ENCODE measurements at regions of chr9 and their contacts with region 1.

Region 1: GRCh38 chr9:93095205-93096130 is 549 bp upstream of the CARD19 start:
- DNase-seq: peak; percentile 100
- H3K4me3 Mint-ChIP-seq: peak overlapping the region; percentile 89
- H3K27ac Mint-ChIP-seq: peak overlapping the region; percentile 99
- H3K4me1 Mint-ChIP-seq: peaks cover 73% of the 10 kb centered on the region
- H3K27me3 Mint-ChIP-seq: no peaks in the 10 kb centered on the region

Region 2: DNA sequence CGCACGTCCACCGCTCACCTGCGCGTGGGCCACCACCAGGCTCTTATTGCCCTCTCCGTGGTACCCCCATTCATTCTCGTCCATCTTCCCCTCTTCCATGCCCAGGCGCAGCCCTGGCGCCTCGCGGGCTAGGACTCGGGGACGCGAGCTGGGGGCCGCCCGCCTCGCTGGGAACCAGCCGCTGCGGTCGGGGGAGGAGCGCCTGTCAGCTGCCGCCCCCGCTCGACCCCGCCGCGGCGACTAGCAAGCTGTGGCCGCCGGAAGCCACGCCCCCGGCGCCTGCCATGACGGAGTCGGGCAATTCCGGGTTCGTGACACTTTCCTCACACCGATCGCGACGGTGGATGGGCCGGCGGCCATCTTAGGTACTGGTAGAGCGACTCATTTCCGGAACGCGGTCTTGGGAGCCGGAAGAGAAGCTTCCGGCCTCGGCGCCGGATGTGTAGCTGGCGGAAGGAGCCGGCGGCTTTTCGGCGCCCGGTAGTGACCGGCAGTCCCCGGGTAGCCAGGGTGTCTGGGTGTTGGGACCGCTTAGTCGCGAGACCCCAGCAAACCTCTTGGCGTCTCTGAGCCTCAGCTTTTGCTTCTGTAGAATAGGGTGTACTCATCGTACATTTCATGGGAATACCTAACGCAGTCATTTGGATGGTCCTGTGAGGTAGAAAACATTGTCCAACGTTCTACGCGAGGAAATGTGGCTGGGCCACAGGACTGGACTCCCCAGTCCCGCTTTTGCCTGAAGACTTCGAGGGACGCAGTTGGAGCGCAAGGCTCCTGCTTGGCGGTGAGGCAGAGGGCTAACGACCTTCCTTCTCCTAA is 425.4 kb before region 1 on chr9 and contains the start of gene IPPK:
- intact Hi-C with region 1: loop called (anchors 10 kb)
- DNase-seq: peak; percentile 98
- H3K4me3 Mint-ChIP-seq: peak within 1 kb of the TSS; percentile 88
- H3K27ac Mint-ChIP-seq: peak within 1 kb of the TSS; percentile 88
- H3K4me1 Mint-ChIP-seq: peaks cover 38% of the 10 kb centered on the region
- H3K27me3 Mint-ChIP-seq: no peaks in the 10 kb centered on the region
- total RNA-seq, gene IPPK: 14.8 and 14.9 TPM in 2 replicates

Region 3: DNA sequence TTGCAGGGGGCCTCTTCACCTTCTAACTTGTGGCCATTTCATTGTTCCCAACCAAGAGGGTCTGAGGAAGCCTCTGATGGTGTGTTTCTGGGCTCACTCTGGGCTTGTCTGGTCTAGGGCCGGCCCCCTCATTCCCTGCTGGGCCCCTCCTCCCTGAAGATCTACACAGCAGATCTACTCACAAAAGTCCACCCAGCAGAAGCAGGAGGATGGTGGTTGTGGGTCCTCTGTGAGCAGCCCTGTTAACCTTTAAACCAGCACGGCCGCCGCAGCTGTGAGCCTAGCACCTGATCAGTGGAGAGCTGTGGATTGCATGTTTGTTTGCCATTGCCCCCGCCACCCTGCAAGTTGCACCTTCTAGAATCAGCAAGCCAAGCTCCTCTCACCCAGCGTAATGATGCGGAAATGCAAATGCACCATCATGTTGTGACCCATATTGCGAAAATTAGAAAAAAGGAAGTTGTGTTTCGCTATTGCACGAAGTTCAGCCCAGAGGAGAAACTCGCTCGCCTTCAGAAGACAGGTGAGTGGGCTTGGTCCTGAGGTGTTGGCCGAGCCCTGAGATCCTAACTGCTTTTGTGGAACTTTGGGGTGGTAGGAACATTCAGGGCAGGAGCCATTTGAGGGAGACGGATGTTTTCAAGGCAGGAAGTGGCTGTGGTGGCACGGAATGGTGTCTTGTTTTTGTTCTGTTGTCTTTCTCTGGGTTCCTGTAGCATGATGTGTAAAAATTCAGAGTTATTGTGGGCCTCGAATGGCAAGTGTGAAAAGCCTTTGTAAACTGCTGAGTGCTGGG is 131.4 kb before region 1 on chr9:
- intact Hi-C with region 1: loop called (anchors 1 kb)
- DNase-seq: peak; percentile 77
- H3K4me3 Mint-ChIP-seq: peak overlapping the region; percentile 98
- H3K27ac Mint-ChIP-seq: peak overlapping the region; percentile 97
- H3K4me1 Mint-ChIP-seq: peaks cover 69% of the 10 kb centered on the region
- H3K27me3 Mint-ChIP-seq: no peaks in the 10 kb centered on the region

Region 4: GRCh38 chr9:93058355-93059096 is 36.9 kb before region 1 on chr9 and contains the start of gene SUSD3:
- intact Hi-C with region 1: loop called (anchors 1 kb)
- DNase-seq: peak; percentile 70
- H3K4me3 Mint-ChIP-seq: peak within 1 kb of the TSS; percentile 91
- H3K27ac Mint-ChIP-seq: peak within 1 kb of the TSS; percentile 94
- H3K4me1 Mint-ChIP-seq: peaks cover 51% of the 10 kb centered on the region
- H3K27me3 Mint-ChIP-seq: no peaks in the 10 kb centered on the region
- total RNA-seq, gene SUSD3: 31.7 and 33.2 TPM in 2 replicates

Region 5: DNA sequence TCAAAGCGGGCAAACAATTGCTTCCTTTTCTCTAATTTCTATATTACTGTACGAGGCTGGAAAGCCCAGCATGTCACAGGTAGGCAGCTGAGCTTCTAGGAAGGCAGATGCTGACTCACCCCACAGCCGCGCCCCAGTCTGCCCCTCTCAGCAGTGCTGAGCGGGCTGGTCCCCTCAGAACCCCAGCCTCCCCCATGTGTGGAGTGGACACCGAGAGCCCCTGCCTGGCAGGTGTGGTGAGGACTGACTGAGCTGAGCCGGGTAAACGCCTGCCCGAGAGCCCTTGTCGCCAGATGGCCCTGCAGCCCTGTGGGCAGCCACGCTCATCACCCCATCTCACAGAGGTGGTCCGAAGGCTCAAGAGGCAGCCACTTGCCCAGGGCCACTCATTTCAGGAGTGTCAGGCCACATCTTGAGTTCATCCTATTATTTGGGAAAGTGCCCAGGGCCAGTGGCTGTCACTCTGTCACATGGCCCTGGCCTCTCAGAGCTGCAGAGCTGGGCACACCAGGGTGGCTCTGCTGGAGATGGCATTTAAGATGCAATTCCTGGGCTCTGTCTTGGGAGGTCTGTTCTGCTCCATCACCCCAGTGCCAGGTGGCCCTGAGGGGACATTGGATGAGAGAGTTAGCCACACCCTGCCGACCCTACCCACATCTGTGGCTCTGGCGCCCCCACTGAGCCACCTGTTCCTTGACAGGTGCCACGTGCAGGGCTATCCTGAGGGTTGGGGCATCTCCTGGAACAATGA is 13.0 kb after region 1 on chr9:
- intact Hi-C with region 1: loop called (anchors 1 kb)
- DNase-seq: peak; percentile 52
- H3K4me3 Mint-ChIP-seq: peak overlapping the region; percentile 58
- H3K27ac Mint-ChIP-seq: peak overlapping the region; percentile 75
- H3K4me1 Mint-ChIP-seq: peaks cover 53% of the 10 kb centered on the region
- H3K27me3 Mint-ChIP-seq: no peaks in the 10 kb centered on the region

Region 6: DNA sequence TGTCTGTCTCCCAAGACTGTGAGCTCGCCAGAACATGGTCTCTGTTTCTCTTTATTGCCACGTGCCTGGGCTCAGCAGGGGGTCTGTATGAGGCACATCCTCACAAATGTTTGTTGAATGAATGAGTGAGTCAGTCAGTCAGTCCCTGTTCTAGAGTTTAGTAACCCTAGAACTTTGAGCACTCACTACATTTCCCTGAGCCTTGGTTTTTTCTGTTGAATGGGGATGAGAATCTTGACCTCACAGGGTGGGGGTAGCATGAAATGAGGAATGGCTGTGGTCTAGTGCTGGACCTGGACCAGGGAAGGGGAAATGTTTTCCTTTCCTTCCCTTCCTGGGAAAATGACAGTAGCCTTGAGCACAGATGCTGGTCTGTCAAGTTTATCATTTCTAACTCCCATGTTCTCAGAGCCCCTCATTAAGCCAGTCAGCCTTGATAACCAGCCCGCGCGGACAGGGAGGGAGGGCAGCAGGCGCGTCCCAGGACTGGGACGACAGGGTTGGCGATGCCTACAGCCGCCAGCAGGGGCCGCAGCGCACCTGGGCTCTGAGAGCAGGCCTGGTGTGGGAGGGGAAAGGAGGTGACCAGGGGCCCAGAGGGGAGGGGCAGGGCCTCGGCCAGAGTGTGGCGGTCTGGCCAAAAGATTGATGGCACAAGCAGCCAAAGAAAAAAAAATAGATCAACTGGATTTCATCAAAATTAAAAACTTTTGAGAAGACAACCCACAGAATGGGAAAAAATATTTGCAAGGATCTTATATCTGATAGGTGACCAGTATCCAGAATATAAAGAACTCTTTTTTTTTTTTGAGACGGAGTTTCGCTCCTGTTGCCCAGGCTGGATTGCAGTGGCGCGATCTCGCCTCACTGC is 64.4 kb after region 1 on chr9:
- intact Hi-C with region 1: loop called (anchors 1 kb)
- DNase-seq: peak; percentile 67
- H3K4me3 Mint-ChIP-seq: no peak overlapping the region
- H3K27ac Mint-ChIP-seq: no peak overlapping the region
- H3K4me1 Mint-ChIP-seq: peaks cover 25% of the 10 kb centered on the region
- H3K27me3 Mint-ChIP-seq: no peaks in the 10 kb centered on the region

Region 7: DNA sequence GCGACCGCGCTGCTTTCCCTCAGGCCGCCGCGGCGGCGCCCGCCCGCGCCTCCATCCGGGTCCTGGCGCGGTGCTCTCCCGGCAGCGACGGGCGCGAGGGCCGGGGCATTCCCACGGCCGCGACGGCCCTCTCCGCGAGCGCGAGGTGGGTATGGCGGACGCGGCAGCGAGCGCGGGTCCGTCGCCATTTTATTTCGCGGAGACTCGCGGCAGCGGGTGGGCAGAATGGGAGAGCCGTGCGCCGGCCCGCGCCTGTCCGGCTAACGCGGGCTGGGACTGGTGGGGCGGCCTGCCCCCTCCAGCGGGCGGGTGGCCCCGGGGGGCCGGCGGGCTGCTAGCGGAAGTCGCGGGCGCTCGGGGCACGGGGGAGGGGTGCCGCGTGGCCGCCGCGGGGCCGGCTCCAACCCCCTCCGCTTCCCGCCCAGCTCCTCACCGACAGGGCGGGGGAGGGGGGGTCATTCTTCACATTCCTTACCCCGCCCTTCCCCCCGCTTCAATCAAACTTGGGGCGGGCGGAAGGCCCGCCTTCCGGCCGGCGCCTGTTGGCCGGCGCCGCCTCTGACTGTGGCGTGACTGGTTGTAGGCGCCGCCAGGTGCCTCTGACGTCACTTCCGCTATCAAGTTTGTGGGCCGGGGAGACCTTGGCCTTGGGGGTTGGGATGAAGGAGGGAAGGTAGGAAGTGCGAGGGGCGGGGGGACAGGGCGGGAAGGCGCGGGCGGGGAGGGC is 1070.9 kb after region 1 on chr9:
- intact Hi-C with region 1: loop called (anchors 1 kb)
- DNase-seq: peak; percentile 92
- H3K4me3 Mint-ChIP-seq: peak overlapping the region; percentile 95
- H3K27ac Mint-ChIP-seq: peak overlapping the region; percentile 89
- H3K4me1 Mint-ChIP-seq: peaks cover 46% of the 10 kb centered on the region
- H3K27me3 Mint-ChIP-seq: peaks cover 2% of the 10 kb centered on the region